BJ (cell line): ENCODE measurements at regions of chr2 and their contacts with region 1.

Region 1: DNA sequence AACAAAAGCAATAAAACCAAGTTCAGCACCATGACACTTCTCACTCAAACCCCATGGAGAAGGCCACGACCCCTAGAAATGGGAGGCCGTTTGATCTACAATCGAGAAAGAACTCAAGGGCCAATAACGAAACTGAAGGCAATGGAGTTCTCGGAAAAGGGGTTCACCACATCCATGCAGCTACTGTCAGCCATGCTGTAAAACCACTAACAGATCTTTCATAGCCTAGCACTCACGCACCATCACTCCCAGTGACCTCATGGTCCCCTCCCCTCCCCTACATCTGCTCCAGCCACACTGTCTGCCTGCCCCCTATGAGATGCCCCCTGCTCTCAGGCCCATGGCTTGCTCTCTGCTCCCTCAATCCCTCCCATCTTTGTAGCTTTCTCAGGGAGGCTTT is 135.3 kb downstream of the TMEM163 start:
- DNase-seq: no peak
- H3K4me3 ChIP-seq: no peak overlapping the region
- H3K27me3 ChIP-seq: peaks cover 2% of the 10 kb centered on the region; the same call in 1 of the 2 replicates
- CTCF ChIP-seq: no peak

Region 2: GRCh38 chr2:134109725-134110124 is 473.7 kb before region 1 on chr2:
- CTCF ChIA-PET with region 1: no interaction called
- POLR2A ChIA-PET with region 1: interaction called, 24 read pairs
- DNase-seq: no peak
- H3K4me3 ChIP-seq: no peak overlapping the region
- H3K27me3 ChIP-seq: no peaks in the 10 kb centered on the region; the same call in 1 of the 2 replicates
- CTCF ChIP-seq: no peak

Region 3: DNA sequence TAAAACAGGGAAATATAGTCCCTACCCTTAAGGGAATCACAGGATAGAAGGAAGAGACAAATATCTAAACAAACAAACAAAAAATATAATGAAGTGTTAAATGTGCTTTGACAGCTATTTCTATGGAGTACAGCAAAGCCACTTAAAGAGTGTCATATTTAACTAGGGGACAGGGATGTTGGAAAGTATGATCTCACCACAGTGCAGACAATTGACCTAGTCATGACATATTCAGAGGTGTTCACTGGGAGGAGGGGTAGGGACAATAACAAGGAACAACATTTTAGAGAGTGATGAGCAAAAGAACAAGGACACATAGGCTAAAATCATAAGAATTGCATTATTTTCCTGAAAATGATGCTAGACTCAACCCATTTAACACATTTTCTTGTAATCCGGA is 27.9 kb after region 1 on chr2:
- CTCF ChIA-PET with region 1: no interaction called
- POLR2A ChIA-PET with region 1: no interaction called
- DNase-seq: no peak
- H3K4me3 ChIP-seq: no peak overlapping the region
- H3K27me3 ChIP-seq: no peaks in the 10 kb centered on the region
- CTCF ChIP-seq: no peak